ENCODE measurements at regions of chr1 and their contacts with region 1.

Region 1: DNA sequence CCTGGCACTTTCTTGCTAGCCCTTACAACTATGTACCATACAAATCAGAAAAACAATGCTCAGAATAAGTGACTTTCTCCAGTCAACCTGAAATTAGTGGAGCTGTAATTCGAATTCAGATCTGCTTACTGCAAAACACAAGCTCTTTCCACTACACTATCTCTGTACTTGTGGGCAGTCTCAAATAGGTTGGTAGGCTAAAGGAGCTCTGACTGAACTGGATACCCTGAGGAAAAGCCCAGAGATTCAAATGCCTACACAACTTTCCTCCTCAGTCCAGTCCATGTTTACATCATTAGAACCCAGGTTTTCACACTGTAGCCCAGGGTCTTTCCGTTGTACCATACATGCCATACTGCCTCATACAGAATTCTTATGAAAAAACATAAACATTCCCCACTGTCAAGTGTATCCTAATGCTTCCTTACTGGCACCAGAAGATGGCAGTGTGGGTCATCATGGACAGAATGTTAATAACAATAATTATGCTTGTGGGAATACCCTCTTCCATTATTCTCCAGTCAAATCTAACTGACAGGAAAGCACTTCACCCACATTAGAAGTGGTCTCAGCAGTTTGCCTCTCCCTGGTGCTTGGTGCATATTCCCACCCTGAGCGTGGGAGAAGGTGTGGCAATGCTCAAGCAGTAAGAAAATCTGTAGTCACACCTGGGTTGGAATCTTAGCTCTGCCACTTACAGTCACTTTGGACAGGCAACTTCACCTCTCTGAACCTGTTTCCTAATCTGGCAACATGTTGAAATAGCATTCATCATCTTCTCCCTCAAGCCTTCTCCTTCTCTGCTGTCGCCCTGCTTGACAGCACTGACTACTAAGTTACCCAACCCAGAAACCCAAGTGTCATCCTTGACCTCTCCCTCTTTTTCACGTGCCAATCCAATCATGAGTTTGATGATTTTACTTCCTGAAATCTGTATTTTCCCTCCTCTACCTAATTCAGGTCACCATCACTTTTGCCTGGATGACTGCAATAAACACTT is 14.4 kb upstream of the ZFYVE9 start:
- DNase-seq: peak; percentile 17
- H3K4me3 ChIP-seq: no peak overlapping the region
- CTCF ChIP-seq: peak; percentile 75

Region 2: DNA sequence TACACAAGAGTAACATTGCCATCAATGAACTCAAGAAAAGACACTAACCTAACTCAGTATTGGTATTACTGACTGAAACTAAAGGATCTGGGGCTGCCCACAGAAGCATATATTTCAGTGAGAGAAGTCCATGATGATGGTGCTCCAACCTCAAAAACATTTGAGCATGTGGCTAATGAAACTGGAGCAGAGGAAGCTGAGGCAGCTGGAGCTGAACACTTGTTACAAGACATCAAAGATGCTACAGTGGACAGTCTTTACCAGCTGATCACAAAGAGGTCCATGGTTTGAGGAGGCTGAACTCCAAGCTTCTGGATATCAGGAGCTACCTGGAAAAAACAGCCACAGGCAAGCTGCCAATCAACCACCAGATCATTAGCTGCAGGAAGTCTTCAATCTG is 754.9 kb before region 1 on chr1:
- CTCF ChIA-PET with region 1: no interaction called
- POLR2A ChIA-PET with region 1: no interaction called
- DNase-seq: no peak
- H3K4me3 ChIP-seq: no peak overlapping the region
- CTCF ChIP-seq: no peak

Region 3: DNA sequence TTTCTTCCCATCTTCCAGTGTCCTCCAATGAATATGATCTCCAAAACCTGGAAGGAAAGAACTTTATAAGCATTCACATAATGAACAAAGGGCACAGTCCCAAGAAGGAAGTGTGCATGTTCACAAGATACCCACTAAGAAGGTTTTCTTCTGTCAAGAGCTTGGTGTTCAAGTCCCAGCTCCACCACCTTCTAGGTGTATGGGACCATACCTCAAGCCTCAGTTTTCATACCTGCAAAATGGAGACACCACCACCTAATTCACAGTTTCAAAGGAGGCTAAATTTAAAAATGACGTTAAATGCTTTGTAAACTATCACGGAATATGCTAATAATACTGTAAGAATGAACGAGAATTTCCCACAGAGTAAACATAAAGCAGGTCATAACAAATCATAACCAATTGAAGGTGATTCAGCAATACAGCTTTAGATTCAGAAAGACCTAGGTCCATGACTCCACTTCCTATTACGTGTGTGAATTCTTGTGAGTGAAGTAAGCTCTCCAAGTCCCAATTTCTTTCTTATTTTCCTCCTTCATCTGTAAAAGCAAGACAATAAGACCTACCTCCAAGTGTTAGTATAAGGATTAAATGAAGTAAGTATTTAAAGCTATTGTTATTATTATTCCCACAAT is 85.8 kb before region 1 on chr1:
- CTCF ChIA-PET with region 1: no interaction called
- POLR2A ChIA-PET with region 1: no interaction called
- DNase-seq: no peak
- H3K4me3 ChIP-seq: no peak overlapping the region
- CTCF ChIP-seq: no peak

Region 4: GRCh38 chr1:52111492-52111891 is 16.0 kb before region 1 on chr1:
- CTCF ChIA-PET with region 1: interaction called, 22 read pairs
- POLR2A ChIA-PET with region 1: no interaction called
- DNase-seq: no peak
- H3K4me3 ChIP-seq: no peak overlapping the region
- CTCF ChIP-seq: no peak

Region 5: DNA sequence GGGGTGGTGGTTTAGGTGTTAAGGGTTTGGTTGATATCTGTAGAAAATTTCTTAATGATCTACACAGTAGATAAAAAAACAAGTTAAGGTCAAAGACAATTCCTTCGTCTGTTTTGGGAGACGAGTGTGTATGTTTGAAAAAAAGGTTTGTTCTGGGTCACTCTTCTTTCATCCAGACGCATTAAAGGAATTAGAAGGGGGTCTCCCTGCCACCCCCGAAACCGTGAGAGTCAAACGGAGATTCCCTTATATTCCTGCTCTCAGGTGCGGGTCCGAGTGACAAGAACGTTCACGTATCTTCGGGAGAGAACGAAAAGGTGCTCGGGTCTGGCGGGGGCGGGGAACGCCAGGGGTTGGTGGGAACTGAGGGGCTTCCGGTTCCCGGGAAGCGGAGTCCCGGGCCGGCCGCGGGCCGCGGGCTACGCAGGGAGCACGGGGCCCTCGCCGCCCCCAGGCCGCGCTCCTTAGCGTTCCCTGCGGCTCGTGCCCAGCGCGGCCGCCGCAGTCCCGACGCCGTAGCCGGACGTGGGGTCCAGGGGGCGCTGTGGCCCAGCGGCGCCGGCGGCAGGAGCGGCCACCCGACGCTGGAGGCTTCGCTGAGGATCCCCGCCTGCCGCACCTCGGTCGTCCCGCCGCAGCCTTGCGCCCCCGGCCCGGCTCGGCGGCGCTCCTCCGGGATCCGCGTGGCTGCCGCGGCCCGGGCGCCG is 14.2 kb after region 1 on chr1 and contains the start of gene ZFYVE9:
- CTCF ChIA-PET with region 1: interaction called, 17 read pairs
- POLR2A ChIA-PET with region 1: no interaction called
- DNase-seq: no peak
- H3K4me3 ChIP-seq: peak within 1 kb of the TSS; percentile 79
- CTCF ChIP-seq: peak; percentile 79

Region 6: GRCh38 chr1:52159033-52159789 is 31.7 kb after region 1 on chr1:
- CTCF ChIA-PET with region 1: no interaction called
- POLR2A ChIA-PET with region 1: no interaction called
- DNase-seq: no peak
- H3K4me3 ChIP-seq: no peak overlapping the region
- CTCF ChIP-seq: no peak

Region 7: GRCh38 chr1:52296345-52296744 is 168.9 kb after region 1 on chr1:
- CTCF ChIA-PET with region 1: interaction called, 136 read pairs
- POLR2A ChIA-PET with region 1: no interaction called
- DNase-seq: peak; percentile 12
- H3K4me3 ChIP-seq: no peak overlapping the region
- CTCF ChIP-seq: peak; percentile 59

Region 8: DNA sequence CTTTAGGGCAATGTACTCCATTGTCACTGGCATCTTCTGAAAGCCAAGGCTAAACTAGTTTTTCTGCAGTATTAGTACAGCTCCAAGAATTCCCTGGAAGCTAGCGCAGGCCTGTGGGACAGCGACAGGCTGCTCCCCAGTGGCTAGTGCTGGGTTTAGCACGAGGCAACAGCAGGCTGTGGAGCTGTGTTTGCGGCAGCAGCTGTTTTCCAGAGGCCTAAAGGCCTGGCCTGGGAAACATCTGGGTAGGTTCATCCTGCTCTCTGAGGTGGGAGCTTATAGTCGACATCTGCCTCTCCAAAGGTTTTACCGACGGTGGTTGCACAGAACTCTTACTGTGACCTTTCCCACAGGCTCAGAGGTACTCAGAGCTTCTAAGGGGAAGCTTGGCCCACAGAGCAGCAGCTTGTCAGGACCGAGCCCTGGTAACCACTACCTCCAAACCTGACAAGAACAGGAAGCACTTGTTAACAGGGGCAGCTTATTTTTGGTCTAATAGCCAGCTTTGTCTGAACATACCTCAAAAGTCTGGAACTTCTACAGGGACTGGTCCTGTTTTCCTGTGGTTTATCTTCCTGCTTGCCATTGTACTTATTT is 221.3 kb after region 1 on chr1:
- CTCF ChIA-PET with region 1: interaction called, 39 read pairs
- POLR2A ChIA-PET with region 1: no interaction called
- DNase-seq: no peak
- H3K4me3 ChIP-seq: no peak overlapping the region
- CTCF ChIP-seq: peak; percentile 57

Region 9: GRCh38 chr1:52686830-52687229 is 559.3 kb after region 1 on chr1:
- CTCF ChIA-PET with region 1: interaction called, 10 read pairs
- POLR2A ChIA-PET with region 1: no interaction called
- DNase-seq: no peak
- H3K4me3 ChIP-seq: no peak overlapping the region
- CTCF ChIP-seq: no peak